Activated T-helper 1 cell treated with anti-CD3 and anti-CD28 coated beads, Interleukin-12 subunit alpha, Interleukin-12 subunit beta, Interleukin-2, Interleukin-4 antibody, amounts not matched to agents 30 ng/mL and 10 ng/mL and 1 ng/mL, durations not matched to agents 14 hours and 24 hours and 36 hours (primary cell): ENCODE measurements at regions of chr6 and their contacts with region 1.

Region 1: GRCh38 chr6:110682460-110682853 is 132.8 kb downstream of the CDK19 start:
- DNase-seq: peak; percentile 63
- H3K4me3 Mint-ChIP-seq: no peak overlapping the region
- H3K27ac Mint-ChIP-seq: no peak overlapping the region
- H3K4me1 Mint-ChIP-seq: peaks cover 20% of the 10 kb centered on the region
- H3K27me3 Mint-ChIP-seq: no peaks in the 10 kb centered on the region

Region 2: GRCh38 chr6:110063594-110064263 is 618.7 kb before region 1 on chr6:
- intact Hi-C with region 1: no loop called
- DNase-seq: peak; percentile 10
- H3K4me3 Mint-ChIP-seq: no peak overlapping the region
- H3K27ac Mint-ChIP-seq: no peak overlapping the region
- H3K4me1 Mint-ChIP-seq: no peaks in the 10 kb centered on the region
- H3K27me3 Mint-ChIP-seq: peaks cover 20% of the 10 kb centered on the region

Region 3: DNA sequence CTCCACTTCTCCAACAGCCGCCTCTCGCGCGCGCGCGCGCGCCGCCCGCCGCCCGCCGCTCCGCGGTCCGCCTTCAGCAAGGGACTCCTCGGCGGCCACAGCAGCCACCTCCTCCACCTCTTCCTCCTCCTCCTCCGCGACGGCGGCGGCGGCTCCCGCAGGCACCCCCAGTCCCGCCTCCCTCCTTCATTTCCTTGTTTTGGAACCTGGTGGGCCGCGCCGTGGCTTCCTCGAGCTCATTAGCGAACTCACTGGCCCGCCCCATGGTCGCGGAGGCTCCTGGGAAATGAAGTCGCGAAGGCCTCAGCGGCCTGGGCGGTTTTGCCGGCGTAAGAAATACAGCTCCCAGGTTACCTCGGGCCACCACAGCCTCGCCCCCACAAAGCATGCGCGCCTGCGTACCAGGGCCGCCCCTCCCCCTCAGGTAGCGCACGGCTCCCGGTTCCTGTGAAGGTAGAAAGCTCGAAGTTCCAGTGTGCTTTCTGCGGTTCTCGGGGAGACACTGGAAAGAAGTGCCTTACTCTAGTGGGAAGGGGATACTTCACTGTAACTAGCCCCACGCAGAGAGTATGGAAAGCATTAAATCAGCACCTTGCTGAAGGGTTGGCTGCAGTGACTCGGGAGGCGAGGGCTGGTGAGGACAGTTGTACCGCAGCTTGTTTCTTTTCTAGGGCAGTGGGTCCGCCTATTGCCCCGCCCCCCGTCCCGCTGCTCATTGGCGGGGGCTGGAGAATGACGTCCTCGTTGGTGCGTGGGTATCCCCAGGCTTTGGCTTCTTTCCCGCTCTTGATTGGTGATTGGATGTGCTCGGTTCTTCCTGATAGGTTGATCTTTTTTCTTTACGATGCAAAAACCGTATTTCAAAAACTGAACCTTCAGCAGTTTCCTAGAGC is 133.0 kb after region 1 on chr6 and contains the start of gene CDK19:
- intact Hi-C with region 1: loop called (anchors 1 kb)
- DNase-seq: peak; percentile 97
- H3K4me3 Mint-ChIP-seq: peak within 1 kb of the TSS; percentile 97
- H3K27ac Mint-ChIP-seq: peak within 1 kb of the TSS; percentile 98
- H3K4me1 Mint-ChIP-seq: peaks cover 38% of the 10 kb centered on the region
- H3K27me3 Mint-ChIP-seq: no peaks in the 10 kb centered on the region
- total RNA-seq, gene CDK19: 12.4 and 13.7 TPM in 2 replicates

Region 4: GRCh38 chr6:110949679-110950285 is 267.3 kb after region 1 on chr6:
- intact Hi-C with region 1: loop called (anchors 1 kb)
- DNase-seq: no peak
- H3K4me3 Mint-ChIP-seq: no peak overlapping the region
- H3K27ac Mint-ChIP-seq: no peak overlapping the region
- H3K4me1 Mint-ChIP-seq: peaks cover 8% of the 10 kb centered on the region
- H3K27me3 Mint-ChIP-seq: peaks cover 2% of the 10 kb centered on the region

Region 5: DNA sequence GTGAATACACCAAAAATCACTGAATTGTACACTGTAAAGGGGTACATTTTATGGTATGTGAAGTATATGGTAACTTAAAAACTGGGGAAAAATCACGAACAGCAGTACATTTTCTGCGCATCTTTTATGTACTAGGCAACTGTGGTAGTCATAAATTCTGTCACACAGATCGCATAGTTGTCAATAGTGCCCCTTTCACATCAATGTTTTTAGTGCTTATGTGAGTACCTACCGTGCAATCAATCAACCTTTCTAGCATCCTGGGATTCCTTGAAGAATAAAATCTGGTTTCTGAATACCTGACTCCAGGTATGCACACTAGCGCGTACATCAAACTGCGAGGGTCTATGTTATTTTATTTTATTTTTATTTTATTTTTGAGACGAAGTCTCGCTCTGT is 298.7 kb after region 1 on chr6:
- intact Hi-C with region 1: loop called (anchors 1 kb)
- DNase-seq: no peak
- H3K4me3 Mint-ChIP-seq: peak overlapping the region; percentile 99
- H3K27ac Mint-ChIP-seq: peak overlapping the region; percentile 98
- H3K4me1 Mint-ChIP-seq: peaks cover 14% of the 10 kb centered on the region
- H3K27me3 Mint-ChIP-seq: no peaks in the 10 kb centered on the region

Region 6: GRCh38 chr6:111210194-111210728 is 527.8 kb after region 1 on chr6:
- intact Hi-C with region 1: loop called (anchors 2 kb)
- DNase-seq: no peak
- H3K4me3 Mint-ChIP-seq: no peak overlapping the region
- H3K27ac Mint-ChIP-seq: no peak overlapping the region
- H3K4me1 Mint-ChIP-seq: no peaks in the 10 kb centered on the region
- H3K27me3 Mint-ChIP-seq: peaks cover 4% of the 10 kb centered on the region